ENCODE measurements at regions of chr19 and their contacts with region 1.

Region 1: DNA sequence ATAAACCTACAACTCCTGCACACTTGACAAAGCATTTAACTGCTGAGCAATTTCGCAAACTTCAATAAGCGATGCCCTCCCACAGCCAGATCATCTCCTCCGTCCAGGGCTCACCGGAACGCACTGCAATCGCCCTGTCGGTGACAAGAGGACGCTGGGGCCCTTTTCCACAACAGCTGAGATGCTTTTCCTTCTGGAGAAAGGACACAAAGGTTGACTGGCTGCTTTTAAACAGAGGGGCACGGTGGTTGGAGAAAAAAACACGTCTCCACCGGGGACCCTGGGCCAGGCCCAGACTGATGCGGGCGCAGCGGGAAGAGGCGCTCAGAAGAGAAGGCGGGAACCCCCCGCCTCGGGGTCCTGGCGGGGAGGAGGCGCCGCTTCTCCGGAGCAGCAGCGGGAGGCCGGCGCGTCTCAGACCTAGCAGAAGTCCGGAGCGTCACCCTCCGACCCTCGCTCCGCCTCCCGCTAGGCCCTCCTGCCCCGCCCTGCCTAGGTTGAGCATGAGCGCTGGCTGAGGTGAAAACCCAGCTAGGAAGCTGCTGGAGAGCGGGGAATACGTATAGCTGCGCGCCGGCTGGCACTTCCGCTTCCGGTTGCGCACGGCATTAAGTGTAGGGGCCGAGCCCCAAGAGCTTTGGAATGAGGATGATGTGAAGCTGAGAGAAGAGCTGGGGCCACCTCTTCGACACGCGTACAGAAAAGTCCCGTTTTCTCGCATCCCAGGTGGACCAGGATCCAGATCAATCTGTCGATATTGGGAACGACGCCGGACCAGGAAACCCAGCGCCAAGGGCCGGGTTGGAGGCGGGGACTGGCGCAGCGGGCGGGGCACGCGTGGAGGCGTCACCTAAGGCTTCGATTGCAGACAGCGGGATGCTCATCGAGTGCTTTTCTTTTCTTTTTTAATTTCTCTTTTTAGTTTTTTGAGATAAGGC is at the start of gene ZNF846:
- DNase-seq: peak; percentile 90
- H3K4me3 Mint-ChIP-seq: peak within 1 kb of the TSS; percentile 92
- H3K27ac Mint-ChIP-seq: peak within 1 kb of the TSS; percentile 98
- H3K4me1 Mint-ChIP-seq: peaks cover 4% of the 10 kb centered on the region
- H3K27me3 Mint-ChIP-seq: peaks cover 2% of the 10 kb centered on the region
- total RNA-seq, gene ZNF846: 2.3 and 2.4 TPM in 2 replicates

Region 2: DNA sequence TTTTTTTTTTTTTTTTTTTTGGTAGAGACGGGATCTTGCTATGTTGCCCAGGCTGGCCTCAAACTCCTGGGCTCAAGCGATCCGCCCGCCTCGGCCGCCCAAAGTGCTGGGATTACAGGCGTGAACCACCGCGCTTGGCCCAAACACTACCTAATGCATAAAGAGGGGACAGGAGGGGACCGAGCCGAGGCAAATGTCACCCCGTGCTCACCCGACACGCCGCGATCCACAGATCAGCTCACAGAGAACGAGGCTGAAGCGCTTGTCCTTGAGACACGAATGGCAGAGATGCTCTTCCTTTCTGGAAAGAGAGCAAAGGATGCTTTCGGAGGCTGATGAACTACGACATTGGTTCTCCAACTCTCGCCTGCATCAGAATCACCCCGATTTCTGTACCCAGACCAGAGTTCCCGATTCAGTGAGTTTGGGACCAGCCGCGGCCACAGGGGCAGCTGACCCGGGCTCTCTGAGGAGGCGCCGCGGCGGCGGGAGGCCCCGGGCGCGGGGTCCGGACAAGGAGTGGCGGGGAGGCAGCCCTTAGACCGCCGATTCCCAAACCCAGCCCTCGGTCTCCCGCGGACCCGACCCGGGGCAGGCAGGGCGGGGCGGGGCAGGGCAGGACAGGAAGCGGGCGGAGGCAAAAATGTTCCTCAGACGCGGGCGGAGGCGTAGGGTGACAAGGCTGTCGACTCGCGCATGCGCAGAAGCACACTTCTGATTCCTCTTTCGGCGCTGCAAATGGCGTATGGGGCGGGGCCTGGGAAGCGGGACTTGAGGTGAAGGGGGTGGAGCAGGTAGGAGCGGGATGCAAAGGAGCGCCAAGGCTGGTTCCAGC is 459.1 kb before region 1 on chr19 and contains the start of gene ZNF699:
- intact Hi-C with region 1: loop called (anchors 1 kb)
- DNase-seq: peak; percentile 98
- H3K4me3 Mint-ChIP-seq: peak within 1 kb of the TSS; percentile 87
- H3K27ac Mint-ChIP-seq: peak within 1 kb of the TSS; percentile 94
- H3K4me1 Mint-ChIP-seq: peaks cover 29% of the 10 kb centered on the region
- H3K27me3 Mint-ChIP-seq: peaks cover 3% of the 10 kb centered on the region
- total RNA-seq, gene ZNF699: 4.7 and 5.0 TPM in 2 replicates

Region 3: DNA sequence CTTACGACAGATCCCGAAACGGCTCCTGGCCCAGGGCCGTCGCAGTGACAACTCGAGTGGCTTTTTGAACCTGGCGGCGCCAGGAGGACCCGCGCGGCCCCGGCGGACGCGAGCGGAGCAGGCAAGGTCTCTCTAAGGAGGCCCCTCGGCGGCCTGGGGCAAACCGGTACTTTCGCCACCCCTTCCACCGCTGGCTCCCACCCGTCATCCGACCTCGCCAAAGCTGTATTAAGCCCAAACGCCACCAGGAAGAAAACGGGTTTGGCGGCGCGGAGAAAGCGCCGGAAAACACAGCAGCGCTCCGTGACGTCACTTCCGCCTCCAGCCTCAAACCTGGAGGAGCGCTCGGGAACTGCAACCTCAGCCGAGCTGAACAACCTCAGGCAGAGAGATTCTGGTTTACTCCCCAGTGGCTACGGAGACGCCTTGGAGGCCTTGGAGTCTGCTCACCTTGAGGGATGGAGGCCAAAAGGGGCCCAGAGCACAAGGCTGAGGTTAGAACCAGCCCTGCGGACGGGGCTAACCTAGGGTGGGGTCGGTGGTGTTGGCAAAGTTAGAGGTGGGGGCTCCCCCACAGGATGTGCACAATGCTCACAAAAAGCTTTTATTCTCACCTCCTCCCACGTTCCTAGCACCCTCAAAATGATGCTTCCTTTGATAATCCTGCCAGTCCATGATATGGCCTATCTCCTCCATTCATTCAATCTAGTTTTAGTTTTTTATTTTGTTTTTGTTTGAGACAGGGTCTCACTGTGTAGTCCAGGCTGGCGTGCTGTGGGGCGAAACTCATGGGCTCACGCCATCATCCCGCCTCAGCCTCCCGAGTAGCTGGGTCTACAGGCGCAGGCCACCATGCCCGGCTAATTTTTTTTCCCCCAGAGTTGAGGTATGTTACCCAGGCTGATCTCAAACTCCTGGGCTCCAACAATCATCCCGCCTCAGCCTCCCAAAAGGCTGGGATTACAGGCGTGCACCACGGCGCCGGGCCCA is 332.9 kb before region 1 on chr19 and contains the start of gene ZNF266:
- intact Hi-C with region 1: loop called (anchors 1 kb)
- DNase-seq: peak; percentile 88
- H3K4me3 Mint-ChIP-seq: peak within 1 kb of the TSS; percentile 94
- H3K27ac Mint-ChIP-seq: peak within 1 kb of the TSS; percentile 97
- H3K4me1 Mint-ChIP-seq: peaks cover 29% of the 10 kb centered on the region
- H3K27me3 Mint-ChIP-seq: no peaks in the 10 kb centered on the region
- total RNA-seq, gene ZNF266: 25.3 and 28.2 TPM in 2 replicates

Region 4: GRCh38 chr19:9584073-9584833 is 184.2 kb before region 1 on chr19 and contains the start of gene ZNF121:
- intact Hi-C with region 1: loop called (anchors 1 kb)
- DNase-seq: peak; percentile 76
- H3K4me3 Mint-ChIP-seq: peak within 1 kb of the TSS; percentile 93
- H3K27ac Mint-ChIP-seq: peak within 1 kb of the TSS; percentile 94
- H3K4me1 Mint-ChIP-seq: peaks cover 24% of the 10 kb centered on the region
- H3K27me3 Mint-ChIP-seq: no peaks in the 10 kb centered on the region
- total RNA-seq, gene ZNF121: 63.4 and 64.8 TPM in 2 replicates

Region 5: DNA sequence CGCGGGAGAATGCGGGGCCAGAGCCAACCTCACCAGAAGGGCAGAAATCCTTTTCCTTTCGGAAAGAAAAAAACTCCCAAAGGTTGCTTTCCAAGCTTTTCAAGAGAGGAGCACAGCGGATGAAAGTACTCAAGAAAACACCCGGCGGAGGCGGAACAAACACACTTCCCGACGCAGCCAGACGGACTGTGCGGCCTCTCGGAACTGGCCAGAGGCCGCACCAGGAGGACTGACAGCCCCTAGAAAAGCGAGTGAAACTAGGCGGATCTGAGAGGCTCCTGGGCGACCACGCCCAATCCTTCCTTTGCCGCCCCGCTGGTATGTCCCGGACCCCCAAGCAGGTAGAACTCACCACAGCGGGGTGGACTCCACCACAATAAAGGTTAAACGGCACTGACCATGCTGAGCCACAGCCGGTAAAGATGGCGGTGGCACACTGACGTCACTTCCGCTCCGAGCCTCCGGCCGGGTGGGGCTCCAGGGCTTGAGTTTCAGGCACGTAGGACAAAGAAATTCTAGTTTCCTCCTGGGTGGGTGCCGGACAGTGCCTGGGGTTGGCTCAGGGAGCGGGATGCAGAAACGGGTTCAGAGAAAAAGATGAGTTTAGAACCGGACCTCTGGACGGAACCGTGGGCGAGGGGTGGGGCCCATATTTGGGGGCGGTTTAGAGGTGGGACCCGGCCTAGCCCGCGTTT is 93.6 kb before region 1 on chr19 and contains the start of gene ZNF562:
- intact Hi-C with region 1: loop called (anchors 1 kb)
- DNase-seq: peak; percentile 63
- H3K4me3 Mint-ChIP-seq: peak within 1 kb of the TSS; percentile 89
- H3K27ac Mint-ChIP-seq: peak within 1 kb of the TSS; percentile 95
- H3K4me1 Mint-ChIP-seq: peaks cover 21% of the 10 kb centered on the region
- H3K27me3 Mint-ChIP-seq: no peaks in the 10 kb centered on the region
- total RNA-seq, gene ZNF562: 13.2 and 13.8 TPM in 2 replicates

Region 6: GRCh38 chr19:9818734-9819589 is 50.5 kb after region 1 on chr19 and contains the start of gene FBXL12:
- intact Hi-C with region 1: loop called (anchors 1 kb)
- DNase-seq: peak; percentile 100
- H3K4me3 Mint-ChIP-seq: peak within 1 kb of the TSS; percentile 90
- H3K27ac Mint-ChIP-seq: peak within 1 kb of the TSS; percentile 87
- H3K4me1 Mint-ChIP-seq: peaks cover 27% of the 10 kb centered on the region
- H3K27me3 Mint-ChIP-seq: no peaks in the 10 kb centered on the region
- total RNA-seq, gene FBXL12: 19.4 and 20.7 TPM in 2 replicates

Region 7: DNA sequence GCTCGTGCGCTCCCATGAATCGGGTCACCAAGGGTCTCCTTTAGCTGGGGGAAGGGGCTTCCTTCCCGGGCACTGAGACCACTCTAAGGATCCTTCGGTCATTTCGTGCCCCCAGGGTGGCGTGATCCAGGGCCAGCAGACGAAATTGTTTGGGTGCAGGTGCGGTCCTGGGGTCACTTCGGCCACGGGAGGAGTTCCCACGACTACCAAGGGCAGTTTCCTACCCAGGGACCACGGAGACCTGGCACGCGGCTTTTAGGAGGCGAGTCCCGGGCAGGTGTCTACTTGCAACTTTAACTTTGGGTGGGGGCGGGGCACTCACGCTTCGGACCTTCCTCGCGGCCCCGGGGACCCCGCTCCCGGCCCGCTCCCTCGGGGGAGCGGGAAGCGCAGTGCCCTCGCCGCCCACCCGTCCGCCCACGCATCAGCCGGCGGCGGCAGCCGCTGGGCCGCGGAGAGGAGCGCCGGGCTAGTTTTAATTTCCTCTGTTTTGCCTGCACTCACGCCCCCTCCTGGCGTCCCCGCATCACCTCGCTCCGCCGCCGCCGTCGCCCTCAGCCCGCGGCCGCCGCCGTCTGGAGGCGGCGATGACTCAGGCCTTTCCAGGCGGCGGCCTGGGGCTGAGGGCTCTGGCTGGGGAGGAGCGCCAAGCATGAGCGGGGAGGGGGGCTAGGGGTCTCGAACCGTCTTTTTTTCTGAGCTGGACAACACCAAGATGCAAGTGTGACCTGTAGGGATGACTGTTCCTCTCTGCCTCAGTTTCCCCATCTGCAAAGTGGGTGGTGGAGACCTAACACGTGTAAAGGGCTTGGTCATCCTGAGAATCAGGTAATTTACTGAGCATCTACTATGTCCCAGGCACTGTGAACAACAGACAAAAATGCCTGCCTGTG is 146.1 kb after region 1 on chr19:
- intact Hi-C with region 1: no loop called
- DNase-seq: peak; percentile 69
- H3K4me3 Mint-ChIP-seq: peak overlapping the region; percentile 52
- H3K27ac Mint-ChIP-seq: no peak overlapping the region
- H3K4me1 Mint-ChIP-seq: peaks cover 17% of the 10 kb centered on the region
- H3K27me3 Mint-ChIP-seq: peaks cover 21% of the 10 kb centered on the region